Activated CD4-positive, alpha-beta memory T cell treated with anti-CD3 and anti-CD28 coated beads for 36 hours (primary cell): ENCODE measurements at regions of chr5 and their contacts with region 1.

Region 1: DNA sequence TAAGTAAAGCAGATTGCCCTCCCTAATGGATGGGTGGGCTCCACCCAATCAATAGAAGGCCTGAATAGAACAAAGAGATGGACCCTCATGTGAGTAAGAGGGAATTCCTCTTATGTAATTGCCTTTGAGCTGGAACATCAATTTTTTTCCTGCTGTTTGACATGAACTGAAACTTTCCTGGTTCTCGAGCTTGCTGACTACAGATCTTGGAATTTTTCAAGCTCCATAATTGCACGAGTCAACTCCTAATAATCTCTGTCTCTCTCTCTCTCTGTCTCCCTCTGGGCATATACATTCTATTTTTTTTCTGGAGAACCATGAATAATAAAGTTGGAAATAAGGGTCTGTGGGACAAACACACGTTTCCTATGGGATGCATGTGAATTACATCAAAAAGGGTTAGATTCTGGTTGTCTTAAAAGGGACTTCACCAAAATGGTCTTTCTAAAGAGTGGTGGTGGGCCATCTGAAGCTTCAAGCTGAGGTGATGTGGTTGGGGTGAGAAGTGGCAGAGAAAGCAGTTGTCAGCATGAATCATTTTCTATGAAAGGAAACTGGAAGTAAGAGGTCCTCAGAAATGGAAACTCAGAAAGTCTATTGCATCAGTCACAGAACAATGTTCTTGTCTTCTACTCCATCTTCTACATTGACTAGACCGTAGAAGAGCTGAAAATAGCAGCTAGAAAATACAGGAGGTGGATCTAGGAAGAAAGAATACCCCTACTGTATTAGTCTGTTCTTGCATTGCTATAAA is 47.0 kb upstream of the HOMER1 start:
- DNase-seq: peak; percentile 51
- H3K4me3 Mint-ChIP-seq: peak overlapping the region; percentile 30
- H3K27ac Mint-ChIP-seq: peak overlapping the region; percentile 99
- H3K4me1 Mint-ChIP-seq: peaks cover 42% of the 10 kb centered on the region
- H3K27me3 Mint-ChIP-seq: peaks cover 1% of the 10 kb centered on the region

Region 2: GRCh38 chr5:79582186-79582585 is 21.2 kb after region 1 on chr5:
- CTCF ChIA-PET with region 1: no interaction called
- POLR2A ChIA-PET with region 1: no interaction called
- intact Hi-C with region 1: no loop called
- DNase-seq: no peak
- H3K4me3 Mint-ChIP-seq: no peak overlapping the region
- H3K27ac Mint-ChIP-seq: no peak overlapping the region
- H3K4me1 Mint-ChIP-seq: no peaks in the 10 kb centered on the region
- H3K27me3 Mint-ChIP-seq: peaks cover 18% of the 10 kb centered on the region

Region 3: DNA sequence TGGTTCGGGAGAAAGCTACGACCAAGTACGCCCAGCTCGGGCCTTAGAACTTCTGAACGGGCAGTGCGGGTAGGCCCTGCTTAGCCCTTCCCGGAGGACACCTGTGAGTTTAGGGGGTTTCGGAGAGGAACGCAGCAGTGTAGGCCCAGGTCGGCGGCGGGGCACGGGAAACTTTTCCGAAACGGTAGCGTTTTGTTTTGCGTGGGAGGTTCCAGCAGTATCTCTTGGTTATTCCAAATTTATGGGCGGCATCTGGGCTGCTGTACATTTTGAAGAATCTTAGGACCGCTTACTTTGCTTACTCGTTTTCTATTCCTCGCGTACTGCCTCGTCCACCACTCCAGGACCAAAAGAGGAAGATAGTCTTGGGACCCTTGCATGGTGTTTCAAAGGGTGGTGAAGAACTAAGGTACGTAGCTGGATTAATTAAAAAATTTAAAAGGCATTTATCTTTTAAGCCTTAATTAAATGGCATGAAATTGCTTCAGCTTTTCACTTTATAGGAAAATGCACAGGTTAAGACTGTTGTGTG is 51.8 kb after region 1 on chr5:
- CTCF ChIA-PET with region 1: no interaction called
- POLR2A ChIA-PET with region 1: interaction called, 15 read pairs
- intact Hi-C with region 1: loop called (anchors 1 kb)
- DNase-seq: no peak
- H3K4me3 Mint-ChIP-seq: peak overlapping the region; percentile 98
- H3K27ac Mint-ChIP-seq: peak overlapping the region; percentile 95
- H3K4me1 Mint-ChIP-seq: peaks cover 31% of the 10 kb centered on the region
- H3K27me3 Mint-ChIP-seq: no peaks in the 10 kb centered on the region

Region 4: GRCh38 chr5:79736528-79737514 is 175.9 kb after region 1 on chr5:
- CTCF ChIA-PET with region 1: interaction called, 3 read pairs
- POLR2A ChIA-PET with region 1: no interaction called
- intact Hi-C with region 1: loop called (anchors 1 kb)
- DNase-seq: peak; percentile 21
- H3K4me3 Mint-ChIP-seq: peak overlapping the region; percentile 57
- H3K27ac Mint-ChIP-seq: peak overlapping the region; percentile 62
- H3K4me1 Mint-ChIP-seq: peaks cover 55% of the 10 kb centered on the region
- H3K27me3 Mint-ChIP-seq: peaks cover 34% of the 10 kb centered on the region

Region 5: GRCh38 chr5:79962575-79963222 is 401.8 kb after region 1 on chr5:
- CTCF ChIA-PET with region 1: no interaction called
- POLR2A ChIA-PET with region 1: interaction called, 4 read pairs
- intact Hi-C with region 1: loop called (anchors 1 kb)
- DNase-seq: peak; percentile 85
- H3K4me3 Mint-ChIP-seq: peak overlapping the region; percentile 45
- H3K27ac Mint-ChIP-seq: peak overlapping the region; percentile 92
- H3K4me1 Mint-ChIP-seq: peaks cover 34% of the 10 kb centered on the region
- H3K27me3 Mint-ChIP-seq: peaks cover 22% of the 10 kb centered on the region